Activated T-helper 1 cell treated with anti-CD3 and anti-CD28 coated beads, Interleukin-12 subunit alpha, Interleukin-12 subunit beta, Interleukin-2, Interleukin-4 antibody, amounts not matched to agents 30 ng/mL and 10 ng/mL and 1 ng/mL, durations not matched to agents 14 hours and 24 hours and 36 hours (primary cell): ENCODE measurements at regions of chr11 and their contacts with region 1.

Region 1: DNA sequence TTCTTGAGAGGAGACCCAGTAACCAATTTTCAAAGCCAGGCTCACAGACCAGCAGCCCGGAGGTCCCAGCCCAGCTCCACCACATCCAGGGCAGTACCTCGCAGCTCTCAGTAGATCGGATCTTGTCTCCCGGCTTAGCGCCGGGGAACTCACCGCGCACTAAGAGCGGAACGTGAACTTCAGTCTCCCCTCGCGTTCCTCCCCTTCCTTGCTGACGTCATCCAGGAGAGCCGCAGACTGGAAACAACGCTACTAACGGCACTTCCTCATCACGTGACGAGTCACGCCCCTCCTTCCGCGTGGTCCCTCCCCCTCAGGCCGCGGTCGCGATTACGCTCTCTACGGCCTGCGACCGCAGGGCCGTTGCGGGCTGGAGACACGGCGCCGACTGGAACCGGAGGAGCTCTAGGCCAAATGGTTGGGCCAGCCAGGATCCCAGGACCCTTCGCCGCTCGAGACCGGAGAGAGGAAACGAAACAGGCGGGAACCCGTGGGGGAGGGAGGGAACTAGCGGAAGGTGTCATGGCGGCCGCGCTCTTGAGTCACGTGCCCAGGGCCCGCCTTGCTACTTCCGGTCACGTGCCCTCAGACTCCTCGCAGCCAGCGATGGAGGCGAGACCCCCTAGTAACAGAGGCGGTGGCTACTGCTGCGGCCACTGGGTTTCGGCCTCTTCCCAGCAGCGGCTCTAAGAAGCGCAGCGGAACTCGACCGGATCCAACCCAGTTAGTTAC is at the starts of genes GTF2H1 and HPS5:
- DNase-seq: peak; percentile 95
- H3K4me3 Mint-ChIP-seq: peak within 1 kb of the TSS; percentile 93
- H3K27ac Mint-ChIP-seq: peak within 1 kb of the TSS; percentile 99
- H3K4me1 Mint-ChIP-seq: peaks cover 70% of the 10 kb centered on the region
- H3K27me3 Mint-ChIP-seq: no peaks in the 10 kb centered on the region
- total RNA-seq, gene GTF2H1: 52.2 and 56.9 TPM in 2 replicates
- total RNA-seq, gene HPS5: 19.9 and 21.4 TPM in 2 replicates

Region 2: DNA sequence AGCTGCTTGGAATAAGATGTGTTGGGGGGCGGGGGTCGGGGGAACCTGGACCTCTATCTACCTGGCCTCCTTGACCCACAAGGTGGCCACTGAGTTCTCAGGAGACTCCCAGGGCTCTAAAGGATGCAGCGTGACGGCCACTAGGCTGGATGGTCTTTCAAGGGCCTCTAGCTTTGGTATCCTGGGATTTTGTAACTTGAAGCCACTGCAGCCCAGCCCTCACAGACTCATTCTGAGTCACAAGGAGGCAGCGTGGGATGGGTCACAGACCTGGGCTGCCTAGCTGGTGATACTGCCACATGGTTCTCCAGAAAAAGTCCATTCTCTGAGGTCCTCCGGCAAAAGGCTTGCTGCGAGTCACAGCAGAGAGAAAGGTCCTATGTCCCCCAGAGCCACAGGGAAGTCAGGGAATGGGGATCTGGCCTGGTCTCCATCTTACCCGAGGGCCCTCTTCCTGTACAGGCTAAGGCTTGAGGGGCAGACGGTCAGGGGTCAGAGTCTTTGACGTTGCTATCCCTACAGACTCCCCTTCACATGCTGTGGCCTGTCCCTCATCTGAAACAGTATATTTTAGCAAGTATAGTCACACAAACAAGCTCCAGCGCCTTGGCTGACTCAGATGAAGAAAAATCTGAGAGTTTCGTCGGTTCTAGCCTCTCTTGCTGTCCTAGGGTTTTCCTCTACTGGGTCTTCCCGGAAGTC is 535.2 kb before region 1 on chr11:
- intact Hi-C with region 1: no loop called
- DNase-seq: no peak
- H3K4me3 Mint-ChIP-seq: no peak overlapping the region
- H3K27ac Mint-ChIP-seq: no peak overlapping the region
- H3K4me1 Mint-ChIP-seq: no peaks in the 10 kb centered on the region
- H3K27me3 Mint-ChIP-seq: no peaks in the 10 kb centered on the region

Region 3: GRCh38 chr11:18012863-18013781 is 309.0 kb before region 1 on chr11 and contains the start of gene SERGEF:
- intact Hi-C with region 1: loop called (anchors 1 kb)
- DNase-seq: peak; percentile 92
- H3K4me3 Mint-ChIP-seq: peak within 1 kb of the TSS; percentile 97
- H3K27ac Mint-ChIP-seq: peak within 1 kb of the TSS; percentile 98
- H3K4me1 Mint-ChIP-seq: peaks cover 44% of the 10 kb centered on the region
- H3K27me3 Mint-ChIP-seq: peaks cover 5% of the 10 kb centered on the region
- total RNA-seq, gene SERGEF: 24.5 and 32.8 TPM in 2 replicates

Region 4: DNA sequence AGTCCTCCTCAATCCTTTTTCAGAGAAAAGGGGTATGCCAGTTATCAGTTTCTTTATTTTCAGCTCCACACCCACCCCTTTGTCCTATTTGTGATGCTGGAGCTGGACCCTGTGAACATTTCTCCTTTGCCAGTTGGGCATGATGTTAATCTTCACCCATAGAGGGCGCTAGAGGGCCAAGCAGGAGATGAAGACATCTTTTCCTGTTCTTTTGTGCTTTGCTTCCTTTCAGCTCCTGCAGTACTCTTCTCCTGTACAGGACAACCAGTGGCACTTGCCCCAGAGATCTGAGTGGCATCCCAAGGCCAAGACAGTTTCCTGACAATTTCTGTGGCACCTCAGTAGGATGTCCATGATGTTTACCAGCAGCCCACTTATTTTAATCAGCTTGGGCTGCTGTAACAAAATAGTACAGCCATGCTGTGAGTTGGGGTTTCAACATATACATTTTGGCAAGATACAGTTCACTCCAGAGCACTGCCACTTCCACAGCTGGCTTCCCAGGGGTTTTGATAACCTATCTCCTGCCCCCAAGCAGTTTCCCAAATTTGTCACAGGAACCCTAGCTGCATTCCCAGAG is 78.3 kb before region 1 on chr11:
- intact Hi-C with region 1: loop called (anchors 1 kb)
- DNase-seq: peak; percentile 65
- H3K4me3 Mint-ChIP-seq: no peak overlapping the region
- H3K27ac Mint-ChIP-seq: peak overlapping the region; percentile 10
- H3K4me1 Mint-ChIP-seq: peaks cover 39% of the 10 kb centered on the region
- H3K27me3 Mint-ChIP-seq: peaks cover 27% of the 10 kb centered on the region

Region 5: DNA sequence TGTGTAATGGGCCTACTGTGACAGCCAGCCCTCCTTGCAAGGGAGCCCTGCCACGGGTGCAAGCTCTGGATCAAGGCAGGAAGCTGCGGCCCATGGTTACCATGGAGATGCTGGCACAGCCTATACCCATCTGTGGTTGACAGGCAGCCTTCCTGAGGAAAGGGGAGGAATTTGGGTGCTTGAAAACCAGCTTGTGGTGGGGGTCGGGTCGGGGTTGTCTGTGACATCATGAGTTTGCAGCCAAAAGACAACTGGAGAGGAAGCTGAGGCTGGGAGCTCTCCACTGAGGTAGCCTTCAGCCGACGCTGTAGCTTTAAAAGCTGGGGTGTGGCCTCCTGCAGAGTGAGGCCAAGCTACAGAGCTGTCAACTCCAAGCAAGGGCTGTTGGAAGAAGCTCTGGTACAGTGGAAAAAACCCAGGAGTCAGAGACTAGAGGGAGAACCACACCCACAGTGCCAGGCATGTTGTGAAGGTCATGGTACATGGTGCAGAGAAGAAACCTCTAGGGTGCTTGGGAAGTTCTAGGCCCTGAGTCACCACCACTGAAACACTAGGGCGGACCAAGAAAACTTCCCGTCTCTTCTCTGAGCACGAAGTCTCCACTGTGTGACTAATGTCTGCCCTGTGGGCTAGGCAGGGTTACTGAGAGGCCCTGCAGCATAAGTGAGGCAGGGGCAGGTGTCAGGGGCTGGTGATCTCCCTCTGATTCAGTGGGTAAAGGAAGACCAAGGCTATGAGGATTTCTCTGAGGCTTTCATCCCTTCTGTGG is 61.4 kb after region 1 on chr11:
- intact Hi-C with region 1: loop called (anchors 1 kb)
- DNase-seq: peak; percentile 53
- H3K4me3 Mint-ChIP-seq: peak overlapping the region; percentile 59
- H3K27ac Mint-ChIP-seq: peak overlapping the region; percentile 99
- H3K4me1 Mint-ChIP-seq: peaks cover 38% of the 10 kb centered on the region
- H3K27me3 Mint-ChIP-seq: no peaks in the 10 kb centered on the region

Region 6: DNA sequence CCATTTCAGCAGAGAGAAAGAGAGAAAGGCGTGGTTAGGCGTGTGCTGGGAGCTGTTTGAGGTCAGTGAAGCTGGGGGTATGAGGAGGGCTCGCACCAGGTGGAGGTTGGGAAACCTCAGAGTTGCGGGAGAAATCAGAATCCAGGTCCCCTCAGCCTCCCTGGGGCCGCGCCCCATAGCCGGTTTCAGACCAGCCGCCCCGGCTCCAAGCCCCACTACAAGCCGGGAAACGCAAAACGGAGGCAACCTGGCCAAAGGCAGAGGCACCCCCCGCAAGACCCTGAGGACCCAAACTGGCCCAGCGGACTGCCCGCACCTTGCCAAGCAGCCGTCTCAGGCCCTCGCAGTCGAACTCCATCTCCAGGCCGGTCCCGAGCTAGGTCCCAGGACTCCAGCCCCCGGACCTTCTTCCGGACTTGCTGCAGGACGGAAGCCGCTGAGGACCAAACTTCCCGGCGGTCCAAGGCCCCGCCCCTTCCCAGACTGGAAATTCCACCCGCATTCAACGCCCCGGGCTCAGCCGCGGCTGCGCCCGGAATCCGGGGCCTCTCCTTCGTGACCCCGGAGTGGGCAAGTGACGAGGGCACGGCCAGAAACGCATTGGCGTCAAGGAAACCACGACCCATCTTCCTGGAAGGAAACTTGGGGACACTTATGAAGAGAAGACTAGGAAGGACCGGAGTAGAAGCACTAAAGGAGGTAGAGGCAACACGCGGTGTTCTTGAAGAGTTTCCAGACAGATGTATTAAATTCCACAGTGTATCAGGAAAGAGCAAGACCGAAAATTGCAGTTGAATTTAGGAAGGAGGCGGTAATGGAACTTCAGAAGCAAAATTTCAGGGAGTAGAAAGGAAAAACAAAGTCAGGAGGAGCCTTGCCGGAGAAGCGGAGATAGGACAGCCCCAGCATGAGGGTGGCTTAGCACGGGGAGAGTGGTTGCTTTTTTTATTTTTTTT is 266.4 kb after region 1 on chr11 and contains the start of gene UEVLD:
- intact Hi-C with region 1: loop called (anchors 1 kb)
- DNase-seq: peak; percentile 68
- H3K4me3 Mint-ChIP-seq: no peak within 1 kb of the TSS
- H3K27ac Mint-ChIP-seq: no peak within 1 kb of the TSS
- H3K4me1 Mint-ChIP-seq: peaks cover 11% of the 10 kb centered on the region
- H3K27me3 Mint-ChIP-seq: no peaks in the 10 kb centered on the region
- total RNA-seq, gene UEVLD: 31.2 and 31.4 TPM in 2 replicates

Region 7: DNA sequence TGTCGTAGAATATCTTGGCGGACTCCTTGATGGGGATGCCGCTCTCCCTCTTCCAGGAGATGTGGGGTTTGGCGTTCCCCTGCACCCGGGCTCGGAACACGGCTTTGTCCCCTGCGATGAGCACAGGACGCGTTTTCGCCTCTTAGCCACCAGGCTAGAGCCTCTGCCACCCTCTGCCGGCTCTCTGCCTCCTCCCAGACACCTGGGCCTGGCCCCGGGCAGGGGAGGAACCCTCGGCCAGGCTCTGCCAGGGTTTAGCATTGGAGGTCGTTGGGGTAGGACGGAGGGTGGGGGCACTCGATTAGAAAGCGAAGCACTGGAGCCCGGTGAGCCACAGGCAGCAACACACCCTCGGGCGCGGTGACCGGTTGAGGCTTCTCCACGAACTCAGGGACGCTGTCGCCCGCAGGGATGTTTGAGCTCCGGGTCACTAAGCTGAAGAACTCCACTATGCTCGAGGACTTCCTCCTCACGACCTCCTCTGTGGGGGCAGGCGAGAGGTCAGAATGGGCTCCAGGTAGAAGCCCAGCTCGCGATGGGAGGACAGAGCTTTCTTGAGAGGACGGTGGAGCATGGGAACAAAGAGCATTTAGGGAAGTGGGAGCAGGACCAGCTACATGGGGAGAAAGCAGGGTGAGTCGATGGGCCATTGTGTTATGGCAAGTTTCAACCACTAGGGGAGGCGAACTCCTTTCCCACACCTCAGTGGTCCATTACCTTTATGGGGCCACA is 399.6 kb after region 1 on chr11:
- intact Hi-C with region 1: loop called (anchors 5 kb)
- DNase-seq: peak; percentile 38
- H3K4me3 Mint-ChIP-seq: peak overlapping the region; percentile 87
- H3K27ac Mint-ChIP-seq: no peak overlapping the region
- H3K4me1 Mint-ChIP-seq: peaks cover 21% of the 10 kb centered on the region
- H3K27me3 Mint-ChIP-seq: peaks cover 31% of the 10 kb centered on the region